Panc1 (cell line): ENCODE measurements at regions of chr19 and their contacts with region 1.

Region 1: GRCh38 chr19:8503510-8503909 is 1.1 kb upstream of the PRAM1 start:
- DNase-seq: no peak
- ATAC-seq: no peak
- H3K4me3 ChIP-seq: no peak overlapping the region
- H3K27ac ChIP-seq: no peak overlapping the region
- H3K4me1 ChIP-seq: no peaks in the 10 kb centered on the region
- H3K27me3 ChIP-seq: no peaks in the 10 kb centered on the region
- CTCF ChIP-seq: no peak

Region 2: DNA sequence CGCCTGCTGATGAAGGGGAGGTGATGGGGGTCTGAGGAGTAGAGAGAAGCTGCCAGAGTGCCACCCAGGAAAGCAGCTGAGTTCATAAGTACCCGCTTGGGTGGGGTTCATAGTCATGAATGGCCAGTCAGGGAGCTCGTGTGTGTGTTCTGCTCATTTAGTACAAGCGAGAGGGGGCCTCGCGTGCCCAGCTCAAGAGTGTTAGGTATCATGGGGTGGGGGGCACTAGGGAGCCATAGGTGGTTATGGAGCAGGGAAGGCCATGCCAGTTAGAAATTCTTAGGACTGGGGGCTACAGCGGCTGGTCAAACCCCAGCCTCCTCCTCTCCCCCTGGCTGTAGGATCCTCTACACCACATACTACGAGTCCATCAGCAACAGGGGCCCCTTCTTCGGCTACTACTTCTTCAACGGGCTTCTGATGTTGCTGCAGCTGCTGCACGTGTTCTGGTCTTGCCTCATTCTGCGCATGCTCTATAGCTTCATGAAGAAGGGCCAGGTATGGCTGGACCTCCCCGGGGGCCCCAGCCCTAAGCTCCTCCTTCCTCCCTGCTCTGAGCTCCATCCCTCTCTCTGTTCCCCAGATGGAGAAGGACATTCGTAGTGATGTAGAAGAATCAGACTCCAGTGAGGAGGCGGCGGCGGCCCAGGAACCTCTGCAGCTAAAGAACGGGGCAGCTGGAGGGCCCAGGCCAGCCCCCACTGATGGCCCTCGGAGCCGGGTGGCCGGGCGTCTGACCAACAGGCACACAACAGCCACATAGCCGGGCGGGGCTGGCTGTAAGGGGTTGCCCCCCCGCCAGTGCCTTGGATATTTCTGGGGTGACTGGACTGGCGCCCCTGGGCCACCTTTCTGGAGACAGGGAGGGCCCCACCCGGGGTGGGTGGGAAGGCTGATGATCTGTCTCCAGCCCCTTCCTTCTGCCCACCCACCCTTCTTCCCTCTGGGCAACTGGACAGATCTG is 241.9 kb before region 1 on chr19:
- CTCF ChIA-PET with region 1: no interaction called
- POLR2A ChIA-PET with region 1: interaction called, 13 read pairs
- in situ Hi-C with region 1: no loop called
- intact Hi-C with region 1: no loop called
- DNase-seq: no peak
- ATAC-seq: 0 out of 2 replicates have a peak, but pooled peaks have one; percentile 27
- H3K4me3 ChIP-seq: no peak overlapping the region
- H3K27ac ChIP-seq: no peak overlapping the region
- H3K4me1 ChIP-seq: no peaks in the 10 kb centered on the region
- H3K27me3 ChIP-seq: no peaks in the 10 kb centered on the region
- CTCF ChIP-seq: no peak